Activated CD4-positive, alpha-beta T cell treated with anti-CD3 and anti-CD28 coated beads for 36 hours (primary cell): ENCODE measurements at regions of chr17 and their contacts with region 1.

Region 1: DNA sequence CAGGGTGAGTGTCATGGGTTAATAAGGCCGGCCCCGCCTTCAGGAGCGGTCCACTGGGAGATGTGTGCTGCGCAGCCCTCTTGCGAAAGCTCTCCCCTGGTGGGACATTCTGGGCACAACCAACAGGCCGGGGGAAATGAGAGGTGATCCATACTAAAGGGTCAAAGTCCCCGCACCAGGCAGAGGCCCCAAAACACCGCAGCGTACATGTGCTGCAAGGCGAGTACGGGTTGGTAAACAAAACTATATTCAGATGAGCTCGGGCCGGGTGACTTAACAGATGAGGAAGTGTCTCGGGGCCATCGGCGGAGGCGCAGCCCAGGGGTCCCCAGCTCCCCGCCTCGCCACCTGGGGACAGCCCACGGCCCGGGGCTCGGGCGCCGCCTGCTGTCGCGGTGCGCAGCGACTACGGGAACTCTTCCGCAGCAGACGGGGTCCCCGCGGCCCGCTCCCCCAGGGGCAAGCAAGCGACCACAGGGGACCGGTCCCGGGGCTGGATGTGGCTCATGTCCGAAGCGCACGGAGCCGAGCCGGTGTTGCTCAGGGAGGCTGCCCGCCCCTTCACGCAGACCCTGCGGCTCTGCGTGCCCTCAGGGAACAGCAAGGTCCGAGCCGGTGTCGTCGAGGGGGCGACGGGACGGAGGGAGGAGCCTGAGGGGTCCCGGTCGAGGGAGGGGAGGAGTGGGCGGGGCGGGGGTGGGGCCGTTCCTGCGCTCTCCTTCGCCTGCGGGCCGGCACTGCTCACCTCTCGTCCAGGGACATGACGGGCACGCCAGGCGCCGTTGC is at the start of gene RAB37:
- DNase-seq: peak; percentile 65
- ATAC-seq: peak; percentile 19
- H3K4me3 Mint-ChIP-seq: peak within 1 kb of the TSS; percentile 68
- H3K27ac Mint-ChIP-seq: peak within 1 kb of the TSS; percentile 79
- H3K4me1 Mint-ChIP-seq: peaks cover 49% of the 10 kb centered on the region
- H3K27me3 Mint-ChIP-seq: no peaks in the 10 kb centered on the region
- total RNA-seq, gene RAB37: 2.7 to 3.5 TPM

Region 2: DNA sequence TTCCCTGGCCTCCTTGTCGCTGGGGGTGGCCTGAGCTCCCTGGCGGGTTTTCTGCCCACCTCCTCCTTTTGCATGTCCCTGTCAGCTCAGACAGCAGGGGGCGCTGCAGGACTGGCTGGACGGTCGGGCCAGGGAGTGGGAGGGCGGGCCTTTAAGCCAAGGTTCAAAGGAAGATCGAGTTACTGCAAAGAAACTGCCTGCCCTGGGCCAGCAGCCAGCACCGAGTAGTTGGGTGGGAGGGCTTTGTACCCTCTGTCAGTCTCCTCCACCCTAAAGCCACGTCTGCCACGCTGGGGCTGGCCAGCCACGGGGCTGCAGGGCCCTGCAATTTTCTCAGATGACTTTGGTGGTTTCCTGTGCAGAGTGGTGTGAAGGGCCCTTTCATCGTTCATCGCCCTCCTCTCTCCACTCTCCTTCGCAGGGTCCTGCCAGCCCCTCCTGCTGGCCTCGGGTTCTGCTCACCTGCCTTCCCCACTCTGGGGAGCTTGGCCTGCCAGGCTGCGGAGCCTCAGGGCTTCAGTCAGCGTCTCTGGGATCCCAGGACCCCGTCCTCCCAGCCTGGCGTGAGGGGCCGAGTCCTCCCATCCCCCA is 357.1 kb before region 1 on chr17:
- CTCF ChIA-PET with region 1: interaction called, 4 read pairs
- POLR2A ChIA-PET with region 1: no interaction called
- intact Hi-C with region 1: loop called in 1 of 2 experiments (anchors 10 kb)
- DNase-seq: peak; percentile 97
- ATAC-seq: peak; percentile 97
- H3K4me3 Mint-ChIP-seq: no peak overlapping the region
- H3K27ac Mint-ChIP-seq: no peak overlapping the region
- H3K4me1 Mint-ChIP-seq: no peaks in the 10 kb centered on the region
- H3K27me3 Mint-ChIP-seq: no peaks in the 10 kb centered on the region

Region 3: DNA sequence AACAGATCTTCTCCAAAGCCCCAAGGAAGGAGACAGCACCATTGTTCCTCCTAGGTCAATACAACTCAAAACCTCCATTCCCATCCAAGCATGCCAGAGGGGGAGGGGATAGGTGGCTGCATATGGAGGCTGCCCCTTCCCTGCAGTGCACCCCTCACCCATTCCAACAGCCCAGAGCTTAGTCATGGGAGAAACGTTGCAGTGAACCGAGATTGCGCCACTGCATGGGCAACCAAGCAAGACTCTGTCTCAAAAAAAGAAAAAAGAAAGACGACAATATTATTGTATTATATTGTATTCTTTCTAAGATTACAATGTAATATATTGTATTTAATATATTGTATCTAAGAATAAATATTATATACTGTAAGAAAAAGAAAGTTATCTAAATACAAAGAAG is 76.8 kb before region 1 on chr17:
- CTCF ChIA-PET with region 1: interaction called, 103 read pairs
- POLR2A ChIA-PET with region 1: interaction called, 4 read pairs
- intact Hi-C with region 1: loop called (anchors 1 kb)
- DNase-seq: no peak
- ATAC-seq: no peak
- H3K4me3 Mint-ChIP-seq: no peak overlapping the region
- H3K27ac Mint-ChIP-seq: no peak overlapping the region
- H3K4me1 Mint-ChIP-seq: peaks cover 5% of the 10 kb centered on the region
- H3K27me3 Mint-ChIP-seq: peaks cover 16% of the 10 kb centered on the region

Region 4: GRCh38 chr17:74677558-74678466 is 58.9 kb before region 1 on chr17:
- CTCF ChIA-PET with region 1: interaction called, 13 read pairs
- POLR2A ChIA-PET with region 1: no interaction called
- intact Hi-C with region 1: no loop called
- DNase-seq: no peak
- ATAC-seq: no peak
- H3K4me3 Mint-ChIP-seq: no peak overlapping the region
- H3K27ac Mint-ChIP-seq: no peak overlapping the region
- H3K4me1 Mint-ChIP-seq: peaks cover 19% of the 10 kb centered on the region
- H3K27me3 Mint-ChIP-seq: peaks cover 9% of the 10 kb centered on the region

Region 5: DNA sequence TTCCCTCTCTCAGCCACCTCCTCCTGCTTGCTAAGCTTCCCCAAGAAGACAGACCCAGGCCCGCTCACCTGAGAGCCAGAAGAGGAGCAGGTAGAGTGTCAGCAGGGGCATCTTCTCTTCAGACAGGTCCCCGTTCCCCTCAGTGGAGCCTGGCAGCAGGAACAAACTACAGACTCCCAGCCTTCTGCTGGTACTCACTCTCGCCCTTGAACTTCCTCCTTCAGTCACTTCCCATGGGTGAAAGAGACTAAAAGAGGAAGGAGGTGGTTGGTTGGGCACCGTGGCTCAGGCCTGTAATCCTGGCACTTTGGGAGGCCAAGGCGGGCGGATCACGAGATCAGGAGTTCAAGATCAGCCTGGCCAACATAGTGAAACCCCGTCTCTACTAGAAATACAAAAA is 23.9 kb before region 1 on chr17 and contains the start of gene CD300LF:
- CTCF ChIA-PET with region 1: no interaction called
- POLR2A ChIA-PET with region 1: no interaction called
- intact Hi-C with region 1: no loop called
- DNase-seq: no peak
- ATAC-seq: no peak
- H3K4me3 Mint-ChIP-seq: no peak within 1 kb of the TSS
- H3K27ac Mint-ChIP-seq: no peak within 1 kb of the TSS
- H3K4me1 Mint-ChIP-seq: peaks cover 6% of the 10 kb centered on the region
- H3K27me3 Mint-ChIP-seq: peaks cover 2% of the 10 kb centered on the region
- total RNA-seq, gene CD300LF: not detected

Region 6: GRCh38 chr17:74790161-74791054 is 53.7 kb after region 1 on chr17:
- CTCF ChIA-PET with region 1: interaction called, 21 read pairs
- POLR2A ChIA-PET with region 1: interaction called, 3 read pairs
- intact Hi-C with region 1: no loop called
- DNase-seq: no peak
- ATAC-seq: no peak
- H3K4me3 Mint-ChIP-seq: no peak overlapping the region
- H3K27ac Mint-ChIP-seq: no peak overlapping the region
- H3K4me1 Mint-ChIP-seq: peaks cover 32% of the 10 kb centered on the region
- H3K27me3 Mint-ChIP-seq: no peaks in the 10 kb centered on the region

Region 7: DNA sequence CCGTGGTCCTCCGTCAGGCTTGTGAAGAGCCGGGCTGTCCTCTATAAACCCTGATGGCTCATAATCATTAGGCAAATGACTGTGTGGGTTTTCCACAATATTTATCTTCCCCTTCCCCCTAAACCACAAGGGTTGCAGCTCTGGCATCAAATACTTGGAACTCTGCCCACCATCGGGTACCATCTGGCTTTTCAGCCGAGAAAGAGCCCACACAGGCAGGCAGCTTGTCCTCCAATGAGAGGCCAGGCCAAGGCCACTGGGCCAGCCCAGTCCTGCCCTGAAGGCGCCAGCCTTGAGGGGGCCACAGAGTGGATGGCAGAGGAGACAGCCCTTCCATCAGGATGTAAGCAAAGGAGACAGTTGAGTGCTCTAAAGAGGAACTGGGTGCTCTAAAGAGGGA is 71.2 kb after region 1 on chr17:
- CTCF ChIA-PET with region 1: no interaction called
- POLR2A ChIA-PET with region 1: no interaction called
- intact Hi-C with region 1: no loop called
- DNase-seq: no peak
- ATAC-seq: no peak
- H3K4me3 Mint-ChIP-seq: no peak overlapping the region
- H3K27ac Mint-ChIP-seq: no peak overlapping the region
- H3K4me1 Mint-ChIP-seq: no peaks in the 10 kb centered on the region
- H3K27me3 Mint-ChIP-seq: no peaks in the 10 kb centered on the region

Region 8: DNA sequence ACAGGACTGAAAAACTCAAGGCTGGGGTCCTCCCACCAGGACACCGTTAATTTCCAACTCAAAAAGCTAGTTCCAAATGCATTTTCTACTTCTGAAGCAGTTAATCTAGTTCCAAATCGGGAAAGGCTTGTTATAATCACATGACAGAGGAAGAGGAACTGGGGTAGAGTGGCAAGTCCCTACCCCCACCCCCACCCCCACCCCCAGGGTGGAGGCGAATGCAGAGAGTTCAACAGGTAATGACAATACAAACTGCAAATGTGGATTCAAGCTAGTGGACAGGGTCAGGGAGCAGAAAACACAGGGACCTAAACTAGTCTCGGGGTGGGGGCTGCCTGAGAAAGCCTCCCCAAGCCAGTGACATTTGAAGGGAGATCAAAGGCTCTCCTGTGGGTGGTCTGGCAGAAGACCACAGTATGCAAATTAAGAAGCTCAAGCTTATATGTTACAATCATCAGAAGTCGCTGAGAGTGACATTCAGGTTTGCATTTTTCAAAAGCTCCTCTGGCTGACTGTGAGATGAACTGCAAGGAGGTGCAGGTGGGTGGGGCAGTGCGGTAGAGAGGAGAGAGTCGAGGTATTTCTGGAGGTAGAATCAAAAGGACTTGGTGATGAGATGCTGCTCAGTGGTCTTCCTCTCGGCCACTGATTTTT is 608.9 kb after region 1 on chr17:
- CTCF ChIA-PET with region 1: no interaction called
- POLR2A ChIA-PET with region 1: no interaction called
- intact Hi-C with region 1: no loop called
- DNase-seq: peak; percentile 74
- ATAC-seq: peak; percentile 58
- H3K4me3 Mint-ChIP-seq: peak overlapping the region; percentile 60
- H3K27ac Mint-ChIP-seq: peak overlapping the region; percentile 90
- H3K4me1 Mint-ChIP-seq: peaks cover 97% of the 10 kb centered on the region
- H3K27me3 Mint-ChIP-seq: no peaks in the 10 kb centered on the region